ENCODE measurements at regions of chr2 and their contacts with region 1.

Region 1: DNA sequence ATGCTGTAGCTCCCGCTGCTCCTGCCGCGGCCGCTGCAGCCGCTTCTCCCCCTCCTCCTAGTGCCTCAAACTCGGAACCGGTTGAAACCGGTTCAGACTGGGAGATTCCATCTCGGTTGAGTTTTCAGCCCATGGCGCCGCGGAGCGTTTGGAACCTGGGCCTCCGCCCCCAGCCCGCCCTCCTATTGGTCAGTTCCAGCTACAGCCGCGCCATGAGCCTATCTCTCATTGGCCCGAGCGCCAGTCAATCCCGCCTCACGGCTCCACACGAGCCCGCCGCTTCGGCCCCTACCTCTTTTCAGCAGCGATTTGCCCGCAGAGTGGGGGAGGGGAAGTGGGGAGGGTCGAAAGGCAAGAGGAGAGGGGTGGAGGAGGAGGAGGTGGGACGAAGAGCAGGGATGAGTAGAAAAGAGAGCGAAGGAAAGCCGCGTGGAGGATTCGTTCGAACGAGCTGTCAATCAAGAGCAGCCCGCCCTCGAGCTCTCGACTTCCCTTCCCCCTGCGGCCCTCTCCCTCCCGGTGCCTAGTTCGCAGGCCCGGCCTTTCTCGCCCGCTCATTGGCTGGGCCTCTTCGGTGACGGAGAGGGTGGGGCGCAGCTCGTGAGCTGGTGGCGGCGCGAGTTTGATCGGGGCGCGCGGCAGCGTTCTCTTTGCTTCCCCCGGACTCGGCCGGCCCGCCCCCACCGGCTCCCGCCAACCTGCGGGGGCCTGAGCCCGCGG is at the start of gene XPO1:
- DNase-seq: peak; percentile 98 to 99 (median 98)
- H3K4me3 ChIP-seq: peak within 1 kb of the TSS; percentile 74 to 98 (median 79)
- H3K4me3 Mint-ChIP-seq: peak within 1 kb of the TSS; percentile 93 to 95
- H3K27ac ChIP-seq: peak within 1 kb of the TSS; percentile 93 to 99
- H3K27ac Mint-ChIP-seq: peak within 1 kb of the TSS; percentile 99 to 100 (median 99)
- H3K4me1 ChIP-seq: peaks cover 21 to 32% of the 10 kb centered on the region in 2 donors
- H3K4me1 Mint-ChIP-seq: peaks cover 31% of the 10 kb centered on the region
- H3K27me3 ChIP-seq: no peaks in the 10 kb centered on the region
- H3K27me3 Mint-ChIP-seq: peaks cover 0 to 2% (median 0%) of the 10 kb centered on the region in 3 donors
- CTCF ChIP-seq: no peak
- polyA plus RNA-seq, gene XPO1: 19.0 to 36.4 (median 20.9) TPM

Region 2: GRCh38 chr2:60530660-60531281 is 1007.6 kb before region 1 on chr2:
- intact Hi-C with region 1: loop called in 1 of 2 experiments (anchors 10 kb)
- DNase-seq: peak in 2 of 3 donors; percentile 54 to 63
- H3K4me3 ChIP-seq: peak overlapping the region in 1 of 3 experiments; percentile 47
- H3K4me3 Mint-ChIP-seq: peak overlapping the region; percentile 59 to 84
- H3K27ac ChIP-seq: peak overlapping the region; percentile 65 to 75
- H3K27ac Mint-ChIP-seq: peak overlapping the region; percentile 62 to 96 (median 88)
- H3K4me1 ChIP-seq: peaks cover 85 to 86% of the 10 kb centered on the region in 2 donors
- H3K4me1 Mint-ChIP-seq: peaks cover 97% of the 10 kb centered on the region
- H3K27me3 ChIP-seq: no peaks in the 10 kb centered on the region
- H3K27me3 Mint-ChIP-seq: peaks cover 0 to 2% (median 0%) of the 10 kb centered on the region in 3 donors
- CTCF ChIP-seq: no peak

Region 3: DNA sequence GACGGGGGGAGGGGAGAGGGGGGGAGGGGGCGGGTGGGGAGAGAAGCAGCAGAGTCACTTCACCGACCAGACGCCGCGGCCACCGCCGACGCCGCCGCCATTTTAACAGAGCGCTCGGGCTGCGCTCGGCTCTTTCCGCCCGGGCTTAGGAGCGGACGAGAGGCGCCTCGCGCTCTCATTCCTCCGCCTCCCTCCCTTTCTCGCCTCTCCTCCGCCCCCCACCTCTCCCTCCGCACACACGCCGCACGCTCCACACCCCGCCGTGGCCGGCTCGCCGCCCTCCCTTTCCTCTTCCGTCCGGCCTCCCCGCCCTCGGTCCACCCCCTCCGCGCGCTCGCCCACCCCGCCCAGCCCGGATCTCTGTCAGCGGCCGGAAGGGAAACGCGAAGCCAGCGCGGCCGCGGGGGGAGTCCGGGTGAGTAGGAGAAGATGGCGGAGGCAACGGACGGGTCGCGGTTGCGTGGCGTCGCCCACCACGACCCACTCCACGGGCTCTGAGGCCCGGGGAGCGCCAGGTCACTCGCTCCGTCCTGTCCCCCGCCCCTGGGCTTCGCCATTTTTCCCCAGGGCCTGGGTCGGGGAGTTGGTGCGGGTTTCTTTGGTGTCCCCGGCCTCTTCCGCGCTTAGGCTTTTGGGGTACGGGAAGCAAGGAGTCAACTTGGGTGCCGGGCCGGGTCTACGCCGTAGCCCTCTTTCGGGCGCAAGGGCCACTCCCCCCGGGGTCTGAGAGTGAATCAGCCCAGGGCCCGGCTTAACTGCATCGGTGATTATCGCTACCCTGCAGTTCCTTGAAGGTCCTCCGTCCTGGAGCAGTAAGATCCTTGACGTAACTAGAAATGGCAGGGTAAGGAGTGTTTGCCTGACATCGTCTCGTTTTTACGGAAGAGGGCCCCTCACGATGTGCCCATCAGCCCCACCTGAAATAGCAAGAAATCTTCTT is 67.1 kb before region 1 on chr2 and contains the start of gene USP34:
- intact Hi-C with region 1: loop called (anchors 2 to 5 kb)
- DNase-seq: peak; percentile 88 to 95 (median 95)
- H3K4me3 ChIP-seq: peak within 1 kb of the TSS; percentile 90 to 98 (median 91)
- H3K4me3 Mint-ChIP-seq: peak within 1 kb of the TSS; percentile 94 to 99
- H3K27ac ChIP-seq: peak within 1 kb of the TSS; percentile 96 to 99
- H3K27ac Mint-ChIP-seq: peak within 1 kb of the TSS; percentile 94 to 99 (median 98)
- H3K4me1 ChIP-seq: peaks cover 21 to 32% of the 10 kb centered on the region in 2 donors
- H3K4me1 Mint-ChIP-seq: peaks cover 24% of the 10 kb centered on the region
- H3K27me3 ChIP-seq: no peaks in the 10 kb centered on the region
- H3K27me3 Mint-ChIP-seq: peaks cover 0 to 2% (median 0%) of the 10 kb centered on the region in 3 donors
- CTCF ChIP-seq: no peak
- polyA plus RNA-seq, gene USP34: 2.8 to 47.2 (median 5.9) TPM

Region 4: GRCh38 chr2:61549546-61549945 is 11.2 kb after region 1 on chr2:
- intact Hi-C with region 1: no loop called
- DNase-seq: no peak
- H3K4me3 ChIP-seq: no peak overlapping the region
- H3K4me3 Mint-ChIP-seq: no peak overlapping the region
- H3K27ac ChIP-seq: no peak overlapping the region
- H3K27ac Mint-ChIP-seq: no peak overlapping the region
- H3K4me1 ChIP-seq: no peaks in the 10 kb centered on the region
- H3K4me1 Mint-ChIP-seq: no peaks in the 10 kb centered on the region
- H3K27me3 ChIP-seq: no peaks in the 10 kb centered on the region
- H3K27me3 Mint-ChIP-seq: peaks cover 0 to 2% (median 2%) of the 10 kb centered on the region in 3 donors
- CTCF ChIP-seq: no peak

Region 5: GRCh38 chr2:61854474-61855182 is 316.3 kb after region 1 on chr2:
- intact Hi-C with region 1: loop called in 1 of 2 experiments (anchors 10 kb)
- DNase-seq: peak; percentile 83 to 89 (median 89)
- H3K4me3 ChIP-seq: peak overlapping the region; percentile 80 to 97 (median 93)
- H3K4me3 Mint-ChIP-seq: peak overlapping the region; percentile 98
- H3K27ac ChIP-seq: peak overlapping the region; percentile 21 to 32
- H3K27ac Mint-ChIP-seq: peak overlapping the region; percentile 76 to 89 (median 83)
- H3K4me1 ChIP-seq: peaks cover 19 to 20% of the 10 kb centered on the region in 2 donors
- H3K4me1 Mint-ChIP-seq: peaks cover 22% of the 10 kb centered on the region
- H3K27me3 ChIP-seq: no peaks in the 10 kb centered on the region
- H3K27me3 Mint-ChIP-seq: no peaks in the 10 kb centered on the region
- CTCF ChIP-seq: no peak

Region 6: DNA sequence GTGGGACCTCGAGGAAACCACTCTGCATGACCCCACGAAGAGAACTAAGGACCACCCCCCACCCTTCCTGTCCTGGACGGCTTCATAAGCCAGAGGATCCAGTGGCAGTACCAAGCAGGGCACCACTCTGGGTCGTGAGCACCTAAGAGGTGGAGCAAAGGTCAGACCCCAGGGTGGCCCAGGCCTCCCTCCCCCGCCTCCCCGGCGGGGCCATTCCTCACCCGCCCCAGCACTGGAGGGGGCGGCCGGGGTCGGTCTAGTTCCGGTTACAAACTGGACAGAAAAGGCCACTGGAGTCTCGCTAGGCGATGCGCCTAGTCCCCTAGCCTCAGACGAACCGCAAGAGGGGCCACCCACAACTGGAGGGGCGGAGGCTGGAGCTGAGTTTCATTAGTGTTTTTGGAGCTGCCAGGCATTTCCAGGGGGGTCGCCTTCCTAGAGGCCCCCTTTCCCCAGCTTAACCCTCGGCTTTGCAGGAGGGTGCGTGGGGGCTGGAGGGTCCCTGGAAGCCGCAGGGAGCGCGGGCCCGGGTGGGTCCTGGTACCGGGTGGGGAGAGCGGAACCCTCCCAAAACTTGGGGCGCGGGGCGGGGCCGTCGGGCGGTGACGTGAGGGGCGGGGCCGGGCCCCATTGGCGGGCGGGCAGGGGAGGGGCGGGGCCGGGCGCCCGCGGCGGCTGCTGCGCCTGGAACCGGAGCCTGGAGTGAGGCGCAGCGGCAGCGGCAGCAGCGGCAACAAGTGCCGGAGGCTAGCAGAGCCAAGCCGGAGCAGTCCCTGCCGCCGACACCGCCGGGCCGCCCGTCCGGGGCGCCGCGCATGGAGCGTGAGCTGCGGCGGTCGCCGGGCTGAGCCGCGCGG is 657.3 kb after region 1 on chr2 and contains the start of gene B3GNT2:
- intact Hi-C with region 1: loop called in 1 of 2 experiments (anchors 10 kb)
- DNase-seq: peak; percentile 67 to 75 (median 70)
- H3K4me3 ChIP-seq: peak within 1 kb of the TSS; percentile 90 to 98 (median 97)
- H3K4me3 Mint-ChIP-seq: peak within 1 kb of the TSS; percentile 89 to 90
- H3K27ac ChIP-seq: peak within 1 kb of the TSS; percentile 74 to 95
- H3K27ac Mint-ChIP-seq: peak within 1 kb of the TSS; percentile 76 to 94 (median 90)
- H3K4me1 ChIP-seq: peaks cover 51 to 60% of the 10 kb centered on the region in 2 donors
- H3K4me1 Mint-ChIP-seq: peaks cover 51% of the 10 kb centered on the region
- H3K27me3 ChIP-seq: no peaks in the 10 kb centered on the region
- H3K27me3 Mint-ChIP-seq: peaks cover 0 to 3% (median 1%) of the 10 kb centered on the region in 3 donors
- CTCF ChIP-seq: no peak
- polyA plus RNA-seq, gene B3GNT2: 15.9 to 34.7 (median 18.5) TPM